Aorta (tissue), 5 donors: ENCODE measurements at regions of chr22 and their contacts with region 1.

Region 1: DNA sequence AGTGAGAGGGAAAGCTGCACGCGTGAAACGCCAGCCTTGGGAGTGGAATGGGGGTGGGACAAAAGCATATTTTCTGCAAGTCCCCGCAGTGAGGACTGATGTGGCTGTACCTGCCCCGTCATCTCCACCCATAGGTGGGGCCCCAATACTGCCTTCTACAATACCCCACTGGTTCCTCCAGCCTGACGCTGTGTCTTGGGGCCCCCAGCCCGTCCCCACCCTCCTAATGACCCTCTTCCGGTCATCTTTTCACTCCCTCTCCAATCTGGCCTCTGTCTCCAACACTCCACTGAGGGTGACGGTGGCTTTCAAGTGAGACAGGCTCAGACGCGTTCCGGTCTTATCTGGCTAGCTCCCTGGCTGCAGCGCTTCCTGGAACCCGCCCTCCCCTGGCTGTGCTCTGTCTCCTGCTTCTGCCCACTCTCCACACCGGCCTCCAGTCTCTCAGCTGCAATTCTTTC is 104.2 kb downstream of the MICAL3 start:
- DNase-seq: peak in 1 of 2 donors; percentile 61
- ATAC-seq: peak; percentile 60
- H3K4me3 ChIP-seq: no peak overlapping the region
- H3K27ac ChIP-seq: no peak overlapping the region
- H3K4me1 ChIP-seq: peaks cover 6 to 9% of the 10 kb centered on the region in 2 donors
- H3K27me3 ChIP-seq: no peaks in the 10 kb centered on the region

Region 2: DNA sequence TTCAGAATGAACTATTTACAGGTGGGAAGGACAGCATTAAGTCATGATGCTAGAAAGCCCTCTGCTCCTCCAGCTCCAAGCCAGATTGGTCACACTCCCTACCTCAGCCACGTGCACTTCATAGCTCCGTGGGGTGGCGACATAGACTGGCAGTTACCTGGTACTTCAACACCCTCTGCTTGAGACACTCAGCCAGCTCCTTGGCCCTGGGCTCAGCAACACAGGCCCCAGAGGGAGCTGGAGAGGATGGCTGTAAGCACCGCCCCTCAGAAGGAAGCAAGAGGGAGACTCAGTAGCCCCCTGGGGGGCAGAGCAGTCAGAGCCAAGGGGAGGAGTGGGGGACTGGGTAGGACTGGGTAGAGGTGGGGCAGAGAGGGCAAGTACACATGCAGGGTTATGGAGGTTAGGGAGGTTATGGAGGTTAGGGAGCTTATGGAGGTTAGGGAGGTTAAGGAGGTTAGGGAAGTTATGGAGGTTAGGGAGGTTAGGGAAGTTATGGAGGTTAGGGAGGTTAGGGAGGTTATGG is 43.8 kb before region 1 on chr22:
- intact Hi-C with region 1: no loop called
- DNase-seq: no peak
- ATAC-seq: no peak
- H3K4me3 ChIP-seq: no peak overlapping the region
- H3K27ac ChIP-seq: no peak overlapping the region
- H3K4me1 ChIP-seq: no peaks in the 10 kb centered on the region
- H3K27me3 ChIP-seq: no peaks in the 10 kb centered on the region

Region 3: DNA sequence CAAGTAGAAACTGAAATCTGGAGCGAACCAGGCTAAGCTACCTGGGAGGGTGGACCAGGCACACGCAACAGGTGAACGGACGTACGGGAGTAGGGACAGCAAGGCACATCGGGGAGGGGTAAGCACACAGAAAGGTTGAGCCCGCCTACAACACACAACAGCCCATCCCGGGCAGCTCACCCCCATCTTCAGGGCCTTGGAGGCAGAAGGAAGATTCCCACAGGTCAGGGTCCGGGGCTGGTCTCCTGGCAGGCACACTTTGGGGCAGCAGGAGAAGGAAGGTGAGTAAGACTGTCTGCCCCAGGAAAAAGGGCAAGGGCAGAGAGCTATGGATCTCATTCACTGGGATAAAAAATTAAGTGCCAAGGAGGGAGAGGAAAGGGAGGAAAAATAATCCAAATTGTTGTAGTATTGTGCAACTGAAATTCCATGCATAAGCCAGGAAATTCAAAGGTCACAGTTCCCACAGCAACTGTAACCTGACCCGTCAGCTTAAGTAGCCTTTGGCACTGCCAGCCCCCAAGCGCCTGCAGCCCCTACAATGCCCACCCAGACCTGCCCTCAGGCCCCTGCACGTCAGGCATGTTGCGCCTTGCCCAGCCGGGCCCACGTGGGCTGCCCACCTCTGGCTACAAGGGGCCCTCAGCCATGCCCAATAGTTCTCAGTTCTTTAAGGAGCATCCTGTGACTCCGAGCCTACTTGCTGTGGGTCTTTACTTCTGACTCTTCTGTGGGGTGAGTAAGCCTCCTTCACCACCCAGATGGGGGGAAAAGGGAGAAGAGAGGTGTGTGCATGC is 52.4 kb after region 1 on chr22:
- intact Hi-C with region 1: loop called in 1 of 2 experiments (anchors 5 kb)
- DNase-seq: peak in 1 of 2 donors; percentile 61
- ATAC-seq: peak; percentile 80
- H3K4me3 ChIP-seq: no peak overlapping the region
- H3K27ac ChIP-seq: peak overlapping the region in 1 of 2 donors; percentile 53
- H3K4me1 ChIP-seq: no peaks in the 10 kb centered on the region
- H3K27me3 ChIP-seq: no peaks in the 10 kb centered on the region

Region 4: GRCh38 chr22:18001040-18001893 is 81.1 kb after region 1 on chr22:
- intact Hi-C with region 1: loop called in 1 of 2 experiments (anchors 5 kb)
- DNase-seq: peak; percentile 94 to 96
- ATAC-seq: peak; percentile 97
- H3K4me3 ChIP-seq: peak overlapping the region; percentile 85 to 99
- H3K27ac ChIP-seq: peak overlapping the region in 1 of 2 donors; percentile 81
- H3K4me1 ChIP-seq: no peaks in the 10 kb centered on the region
- H3K27me3 ChIP-seq: no peaks in the 10 kb centered on the region

Region 5: GRCh38 chr22:18057568-18058209 is 137.5 kb after region 1 on chr22:
- intact Hi-C with region 1: loop called in 1 of 2 experiments (anchors 5 kb)
- DNase-seq: peak; percentile 86 to 88
- ATAC-seq: peak; percentile 92
- H3K4me3 ChIP-seq: no peak overlapping the region
- H3K27ac ChIP-seq: peak overlapping the region in 1 of 2 donors; percentile 30
- H3K4me1 ChIP-seq: peaks cover 2 to 3% of the 10 kb centered on the region in 2 donors
- H3K27me3 ChIP-seq: no peaks in the 10 kb centered on the region

Region 6: GRCh38 chr22:18070556-18071306 is 150.6 kb after region 1 on chr22:
- intact Hi-C with region 1: loop called in 1 of 2 experiments (anchors 5 kb)
- DNase-seq: peak in 1 of 2 donors; percentile 32
- ATAC-seq: no peak
- H3K4me3 ChIP-seq: no peak overlapping the region
- H3K27ac ChIP-seq: no peak overlapping the region
- H3K4me1 ChIP-seq: peaks cover 2 to 6% of the 10 kb centered on the region in 2 donors
- H3K27me3 ChIP-seq: no peaks in the 10 kb centered on the region